Activated naive CD4-positive, alpha-beta T cell treated with anti-CD3 and anti-CD28 coated beads for 36 hours (primary cell): ENCODE measurements at regions of chr2 and their contacts with region 1.

Region 1: GRCh38 chr2:196200557-196200956 is 29.2 kb upstream of the STK17B start:
- DNase-seq: peak; percentile 72
- H3K4me3 Mint-ChIP-seq: no peak overlapping the region
- H3K27ac Mint-ChIP-seq: peak overlapping the region; percentile 56
- H3K4me1 Mint-ChIP-seq: peaks cover 52% of the 10 kb centered on the region
- H3K27me3 Mint-ChIP-seq: no peaks in the 10 kb centered on the region

Region 2: DNA sequence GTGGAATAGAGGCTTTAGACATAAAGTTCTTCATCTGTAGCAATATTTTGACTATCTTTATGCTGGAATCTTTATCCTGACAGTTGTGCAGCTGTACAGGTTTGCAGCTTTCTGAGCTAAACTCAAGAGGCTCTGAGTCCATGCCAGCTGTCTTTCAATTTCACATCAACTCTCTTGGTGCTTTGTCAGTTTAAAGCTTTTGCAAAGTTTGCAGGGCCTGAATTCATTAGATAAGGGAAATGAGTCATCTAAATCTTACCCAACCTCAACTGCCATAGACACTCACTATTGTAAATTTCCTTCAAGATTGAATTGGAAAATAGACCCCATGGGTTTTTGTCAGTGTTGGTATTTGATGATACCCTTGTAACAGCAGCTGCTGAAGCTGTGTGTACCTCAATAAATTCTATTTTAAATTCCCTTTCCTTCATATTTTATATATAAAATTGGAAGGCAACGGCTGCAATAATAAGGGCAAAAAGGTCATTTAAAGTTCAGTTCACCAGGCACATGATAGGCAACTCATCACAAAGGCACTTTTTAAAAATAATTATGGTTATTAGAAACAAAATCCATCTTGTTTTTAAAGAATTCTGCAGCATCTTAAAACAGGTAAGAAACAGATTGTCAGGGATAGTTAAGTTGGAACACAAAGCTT is 713.4 kb before region 1 on chr2:
- CTCF ChIA-PET with region 1: no interaction called
- intact Hi-C with region 1: loop called (anchors 2 kb)
- DNase-seq: peak; percentile 34
- H3K4me3 Mint-ChIP-seq: no peak overlapping the region
- H3K27ac Mint-ChIP-seq: peak overlapping the region; percentile 64
- H3K4me1 Mint-ChIP-seq: peaks cover 16% of the 10 kb centered on the region
- H3K27me3 Mint-ChIP-seq: no peaks in the 10 kb centered on the region

Region 3: GRCh38 chr2:196182439-196183171 is 18.0 kb before region 1 on chr2:
- CTCF ChIA-PET with region 1: interaction called, 6 read pairs
- intact Hi-C with region 1: loop called (anchors 1 kb)
- DNase-seq: no peak
- H3K4me3 Mint-ChIP-seq: peak overlapping the region; percentile 46
- H3K27ac Mint-ChIP-seq: peak overlapping the region; percentile 94
- H3K4me1 Mint-ChIP-seq: peaks cover 76% of the 10 kb centered on the region
- H3K27me3 Mint-ChIP-seq: no peaks in the 10 kb centered on the region

Region 4: DNA sequence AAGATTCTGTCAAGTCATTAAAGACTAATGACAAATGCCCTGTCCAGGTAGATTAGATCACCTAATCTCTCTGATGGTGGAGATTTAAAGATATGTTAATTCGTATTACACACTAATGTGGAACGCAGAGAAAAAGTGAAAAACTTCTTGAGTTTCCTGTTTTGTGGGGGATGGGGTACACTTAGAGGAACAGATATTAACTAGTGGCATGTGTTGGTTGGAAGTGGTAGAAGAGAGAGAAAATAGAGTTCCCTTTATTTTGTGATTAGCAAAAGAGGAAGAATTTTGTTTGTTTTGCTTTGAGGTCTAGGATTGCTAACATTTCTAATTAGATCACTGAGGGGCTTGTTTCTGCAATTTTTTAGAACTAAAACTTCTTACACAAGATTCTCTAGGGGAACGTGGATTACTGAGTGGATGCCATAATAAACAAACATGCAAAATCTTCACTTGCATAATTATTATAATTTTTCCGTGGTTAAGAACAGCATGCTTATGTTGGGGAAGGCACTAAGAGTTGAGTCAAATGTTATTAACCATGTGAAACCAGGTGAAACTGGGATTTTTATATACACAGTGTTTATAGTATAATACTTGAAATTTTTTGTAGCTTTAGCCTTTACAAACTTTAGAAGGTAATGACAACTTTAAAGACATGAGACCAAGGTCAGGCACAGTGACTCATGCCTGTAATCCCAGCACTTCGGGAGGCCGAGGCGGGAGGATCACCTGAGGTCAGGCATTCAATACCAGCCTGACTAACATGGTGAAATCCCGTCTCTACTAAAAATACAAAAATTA is 68.2 kb after region 1 on chr2:
- CTCF ChIA-PET with region 1: no interaction called
- intact Hi-C with region 1: loop called (anchors 1 kb)
- DNase-seq: no peak
- H3K4me3 Mint-ChIP-seq: peak overlapping the region; percentile 52
- H3K27ac Mint-ChIP-seq: peak overlapping the region; percentile 65
- H3K4me1 Mint-ChIP-seq: peaks cover 64% of the 10 kb centered on the region
- H3K27me3 Mint-ChIP-seq: no peaks in the 10 kb centered on the region

Region 5: GRCh38 chr2:196376984-196377877 is 176.7 kb after region 1 on chr2:
- CTCF ChIA-PET with region 1: no interaction called
- intact Hi-C with region 1: loop called (anchors 1 kb)
- DNase-seq: peak; percentile 62
- H3K4me3 Mint-ChIP-seq: no peak overlapping the region
- H3K27ac Mint-ChIP-seq: peak overlapping the region; percentile 50
- H3K4me1 Mint-ChIP-seq: peaks cover 12% of the 10 kb centered on the region
- H3K27me3 Mint-ChIP-seq: no peaks in the 10 kb centered on the region